CD8-positive, alpha-beta T cell (primary cell): ENCODE measurements at regions of chr15 and their contacts with region 1.

Region 1: GRCh38 chr15:69452692-69453521 is at the start of gene RPLP1:
- DNase-seq: peak; percentile 91 to 97 (median 95)
- ATAC-seq: peak; percentile 88
- H3K4me3 ChIP-seq: peak within 1 kb of the TSS; percentile 86 to 91
- H3K4me3 Mint-ChIP-seq: peak within 1 kb of the TSS; percentile 97
- H3K27ac ChIP-seq: peak within 1 kb of the TSS; percentile 75 to 92
- H3K27ac Mint-ChIP-seq: peak within 1 kb of the TSS; percentile 99
- H3K4me1 ChIP-seq: peaks cover 32% of the 10 kb centered on the region
- H3K4me1 Mint-ChIP-seq: peaks cover 47% of the 10 kb centered on the region
- H3K27me3 ChIP-seq: no peaks in the 10 kb centered on the region
- H3K27me3 Mint-ChIP-seq: no peaks in the 10 kb centered on the region
- CTCF ChIP-seq: no peak
- total RNA-seq, gene RPLP1: 2,675 to 2,824 TPM

Region 2: DNA sequence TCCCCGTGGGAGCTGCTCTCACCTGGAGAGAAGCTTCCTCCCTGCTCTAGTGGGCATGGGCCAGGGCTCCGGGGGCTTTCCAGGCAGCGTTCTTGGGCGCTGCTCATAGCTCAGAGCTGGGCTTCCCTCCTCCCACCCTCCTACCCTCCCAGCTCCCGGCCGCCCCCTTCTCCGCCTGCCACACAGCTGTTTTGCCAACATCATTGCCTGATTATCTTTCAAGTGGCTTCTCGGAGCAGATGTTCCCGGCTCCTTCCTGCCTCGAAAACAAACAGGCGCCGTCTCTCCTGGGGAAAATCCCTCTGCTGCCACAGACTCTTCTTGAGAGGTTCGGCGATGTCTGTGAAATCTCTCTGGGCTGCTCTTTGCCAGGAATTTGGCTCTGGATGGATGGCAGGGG is 195.3 kb after region 1 on chr15:
- CTCF ChIA-PET with region 1: no interaction called
- POLR2A ChIA-PET with region 1: no interaction called
- intact Hi-C with region 1: no loop called
- DNase-seq: peak in 1 of 9 experiments; percentile 34
- ATAC-seq: no peak
- H3K4me3 ChIP-seq: no peak overlapping the region
- H3K4me3 Mint-ChIP-seq: no peak overlapping the region
- H3K27ac ChIP-seq: no peak overlapping the region
- H3K27ac Mint-ChIP-seq: no peak overlapping the region
- H3K4me1 ChIP-seq: no peaks in the 10 kb centered on the region
- H3K4me1 Mint-ChIP-seq: peaks cover 10% of the 10 kb centered on the region
- H3K27me3 ChIP-seq: no peaks in the 10 kb centered on the region
- H3K27me3 Mint-ChIP-seq: peaks cover 2% of the 10 kb centered on the region
- CTCF ChIP-seq: no peak

Region 3: DNA sequence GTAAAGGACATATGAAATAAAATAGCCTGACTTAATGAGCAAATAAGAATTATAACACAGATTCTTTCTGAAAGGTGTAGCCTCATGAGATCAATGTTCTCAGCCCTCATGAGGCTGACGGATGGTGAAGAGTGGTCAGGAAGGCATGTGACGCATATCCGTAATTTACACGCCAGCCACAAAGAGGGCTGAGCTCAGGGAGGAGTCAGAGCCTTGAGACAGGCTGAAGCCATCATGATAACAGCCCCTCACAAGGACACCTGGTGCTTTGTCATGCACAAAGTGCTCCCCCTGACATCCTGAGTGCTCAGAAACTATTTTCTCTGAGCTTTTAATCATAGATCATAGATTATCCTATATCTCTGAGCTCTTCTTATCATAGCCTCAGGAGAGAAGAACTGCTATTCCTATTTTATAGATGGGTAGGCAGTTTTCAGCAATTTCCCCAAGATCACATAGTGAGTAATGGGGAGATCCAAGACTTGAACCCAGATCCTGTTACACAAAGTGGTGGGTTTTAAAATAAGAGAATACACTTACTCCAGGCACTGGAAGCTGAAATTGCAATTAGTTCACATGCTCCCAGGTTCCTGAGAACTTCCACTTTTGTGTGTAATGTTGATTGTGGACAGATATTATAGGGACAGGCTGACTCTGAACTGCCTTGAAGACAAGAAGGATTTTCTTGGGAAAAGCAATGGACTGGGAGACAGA is 266.8 kb after region 1 on chr15:
- CTCF ChIA-PET with region 1: no interaction called
- POLR2A ChIA-PET with region 1: no interaction called
- intact Hi-C with region 1: loop called in 1 of 2 experiments (anchors 5 kb)
- DNase-seq: peak; percentile 50 to 94 (median 72)
- ATAC-seq: peak; percentile 82
- H3K4me3 ChIP-seq: no peak overlapping the region
- H3K4me3 Mint-ChIP-seq: peak overlapping the region; percentile 36
- H3K27ac ChIP-seq: peak overlapping the region; percentile 50 to 78
- H3K27ac Mint-ChIP-seq: peak overlapping the region; percentile 87
- H3K4me1 ChIP-seq: peaks cover 75% of the 10 kb centered on the region
- H3K4me1 Mint-ChIP-seq: peaks cover 91% of the 10 kb centered on the region
- H3K27me3 ChIP-seq: no peaks in the 10 kb centered on the region
- H3K27me3 Mint-ChIP-seq: no peaks in the 10 kb centered on the region
- CTCF ChIP-seq: no peak